CD4-positive, alpha-beta memory T cell (primary cell): ENCODE measurements at regions of chr1 and their contacts with region 1.

Region 1: DNA sequence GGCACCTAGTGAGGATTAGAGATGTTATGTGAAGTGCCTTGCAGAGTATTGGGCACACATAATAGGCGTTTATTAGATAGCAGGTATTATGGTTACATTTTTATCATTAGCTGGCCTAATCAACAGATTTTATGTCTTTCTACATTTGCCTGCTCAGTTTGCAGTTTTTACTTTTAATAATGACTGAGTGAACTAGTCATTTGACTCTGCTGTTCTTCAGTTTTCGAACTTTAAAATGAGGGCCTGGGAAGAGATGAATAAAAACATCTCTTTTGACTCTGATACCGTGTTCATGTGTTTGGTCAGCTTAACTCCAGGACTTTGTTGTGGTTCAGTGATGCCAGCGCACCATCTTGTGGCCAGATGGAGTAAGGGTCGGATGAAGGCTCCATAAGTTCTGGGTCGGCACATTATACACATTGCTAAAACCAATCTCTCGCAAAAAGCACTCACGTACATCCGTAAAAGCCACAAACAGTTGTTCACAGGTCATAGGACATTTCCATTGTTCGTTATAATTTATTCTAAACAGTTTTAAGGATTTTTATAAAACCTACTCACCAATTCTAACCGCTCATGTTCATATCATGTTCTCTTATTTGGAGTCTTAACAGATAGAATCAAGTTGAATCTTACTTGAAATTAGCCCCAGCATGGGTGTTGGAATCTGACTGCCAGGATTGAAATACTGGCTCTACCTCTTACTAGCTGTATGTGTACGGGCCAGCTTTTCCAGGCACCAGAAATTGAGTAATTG is 78.4 kb upstream of the GPR88 start:
- DNase-seq: peak; percentile 57 to 70 (median 62)
- H3K4me3 ChIP-seq: no peak overlapping the region
- H3K4me3 Mint-ChIP-seq: peak overlapping the region in 7 of 8 donors; percentile 40 to 75 (median 63)
- H3K27ac ChIP-seq: peak overlapping the region; percentile 8
- H3K27ac Mint-ChIP-seq: peak overlapping the region; percentile 65 to 91 (median 90)
- H3K4me1 ChIP-seq: peaks cover 70% of the 10 kb centered on the region
- H3K4me1 Mint-ChIP-seq: peaks cover 44 to 86% (median 60%) of the 10 kb centered on the region in 4 donors
- H3K27me3 ChIP-seq: no peaks in the 10 kb centered on the region
- H3K27me3 Mint-ChIP-seq: no peaks in the 10 kb centered on the region

Region 2: GRCh38 chr1:99808391-99809115 is 651.0 kb before region 1 on chr1:
- CTCF ChIA-PET with region 1: no interaction called
- POLR2A ChIA-PET with region 1: no interaction called
- intact Hi-C with region 1: loop called (anchors 1 kb)
- DNase-seq: peak; percentile 43 to 60 (median 57)
- H3K4me3 ChIP-seq: no peak overlapping the region
- H3K4me3 Mint-ChIP-seq: peak overlapping the region in 1 of 8 donors; percentile 4
- H3K27ac ChIP-seq: no peak overlapping the region
- H3K27ac Mint-ChIP-seq: peak overlapping the region in 1 of 7 donors; percentile 13
- H3K4me1 ChIP-seq: no peaks in the 10 kb centered on the region
- H3K4me1 Mint-ChIP-seq: peaks cover 0 to 6% (median 3%) of the 10 kb centered on the region in 4 donors
- H3K27me3 ChIP-seq: no peaks in the 10 kb centered on the region
- H3K27me3 Mint-ChIP-seq: peaks cover 10 to 13% of the 10 kb centered on the region in 2 donors

Region 3: DNA sequence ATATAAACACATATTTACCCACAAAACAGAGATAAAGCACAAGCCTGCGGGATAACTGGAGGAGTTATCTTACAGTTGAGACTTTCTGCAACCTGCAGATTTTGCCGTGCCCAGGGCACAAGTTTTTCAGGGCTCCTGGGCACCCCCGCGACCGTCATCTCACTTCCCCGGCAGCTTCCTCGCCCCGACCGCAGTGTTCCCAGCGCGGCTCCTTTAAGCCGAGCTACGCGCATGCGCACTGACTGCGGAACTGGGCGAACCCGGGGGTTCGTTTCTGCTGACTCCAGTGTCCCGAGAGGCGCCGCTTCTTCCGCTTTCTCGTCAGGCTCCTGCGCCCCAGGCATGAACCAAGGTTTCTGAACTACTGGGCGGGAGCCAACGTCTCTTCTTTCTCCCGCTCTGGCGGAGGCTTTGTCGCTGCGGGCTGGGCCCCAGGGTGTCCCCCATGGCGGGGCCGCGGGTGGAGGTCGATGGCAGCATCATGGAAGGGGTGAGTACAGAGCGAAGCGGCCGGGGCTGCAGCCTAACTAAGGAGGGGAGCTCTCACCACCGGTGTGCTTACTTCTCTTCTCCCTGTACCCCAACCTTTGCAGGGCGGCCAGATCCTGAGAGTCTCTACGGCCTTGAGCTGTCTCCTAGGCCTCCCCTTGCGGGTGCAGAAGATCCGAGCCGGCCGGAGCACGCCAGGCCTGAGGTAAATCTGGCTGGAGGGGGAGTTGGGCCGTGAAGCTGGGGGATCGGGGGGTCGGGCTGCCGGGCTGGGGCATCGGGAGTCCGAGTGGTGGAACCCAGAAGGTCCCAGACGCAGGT is 193.4 kb before region 1 on chr1 and contains the start of gene RTCA:
- CTCF ChIA-PET with region 1: interaction called, 9 read pairs
- POLR2A ChIA-PET with region 1: interaction called, 12 read pairs
- intact Hi-C with region 1: loop called (anchors 1 kb)
- DNase-seq: peak; percentile 93 to 97 (median 94)
- H3K4me3 ChIP-seq: peak within 1 kb of the TSS; percentile 77
- H3K4me3 Mint-ChIP-seq: peak within 1 kb of the TSS; percentile 99 to 100 (median 100)
- H3K27ac ChIP-seq: peak within 1 kb of the TSS; percentile 78
- H3K27ac Mint-ChIP-seq: peak within 1 kb of the TSS; percentile 96 to 99 (median 98)
- H3K4me1 ChIP-seq: peaks cover 44% of the 10 kb centered on the region
- H3K4me1 Mint-ChIP-seq: peaks cover 19 to 58% (median 39%) of the 10 kb centered on the region in 4 donors
- H3K27me3 ChIP-seq: no peaks in the 10 kb centered on the region
- H3K27me3 Mint-ChIP-seq: no peaks in the 10 kb centered on the region
- total RNA-seq, gene RTCA: 39.7 to 41.4 TPM

Region 4: GRCh38 chr1:100358210-100358609 is 101.3 kb before region 1 on chr1:
- CTCF ChIA-PET with region 1: interaction called, 57 read pairs
- POLR2A ChIA-PET with region 1: interaction called, 233 read pairs
- intact Hi-C with region 1: loop called (anchors 1 kb)
- DNase-seq: no peak
- H3K4me3 ChIP-seq: no peak overlapping the region
- H3K4me3 Mint-ChIP-seq: peak overlapping the region; percentile 53 to 100 (median 96)
- H3K27ac ChIP-seq: no peak overlapping the region
- H3K27ac Mint-ChIP-seq: peak overlapping the region; percentile 5 to 97 (median 66)
- H3K4me1 ChIP-seq: peaks cover 85% of the 10 kb centered on the region
- H3K4me1 Mint-ChIP-seq: peaks cover 63 to 98% (median 79%) of the 10 kb centered on the region in 4 donors
- H3K27me3 ChIP-seq: no peaks in the 10 kb centered on the region
- H3K27me3 Mint-ChIP-seq: no peaks in the 10 kb centered on the region

Region 5: DNA sequence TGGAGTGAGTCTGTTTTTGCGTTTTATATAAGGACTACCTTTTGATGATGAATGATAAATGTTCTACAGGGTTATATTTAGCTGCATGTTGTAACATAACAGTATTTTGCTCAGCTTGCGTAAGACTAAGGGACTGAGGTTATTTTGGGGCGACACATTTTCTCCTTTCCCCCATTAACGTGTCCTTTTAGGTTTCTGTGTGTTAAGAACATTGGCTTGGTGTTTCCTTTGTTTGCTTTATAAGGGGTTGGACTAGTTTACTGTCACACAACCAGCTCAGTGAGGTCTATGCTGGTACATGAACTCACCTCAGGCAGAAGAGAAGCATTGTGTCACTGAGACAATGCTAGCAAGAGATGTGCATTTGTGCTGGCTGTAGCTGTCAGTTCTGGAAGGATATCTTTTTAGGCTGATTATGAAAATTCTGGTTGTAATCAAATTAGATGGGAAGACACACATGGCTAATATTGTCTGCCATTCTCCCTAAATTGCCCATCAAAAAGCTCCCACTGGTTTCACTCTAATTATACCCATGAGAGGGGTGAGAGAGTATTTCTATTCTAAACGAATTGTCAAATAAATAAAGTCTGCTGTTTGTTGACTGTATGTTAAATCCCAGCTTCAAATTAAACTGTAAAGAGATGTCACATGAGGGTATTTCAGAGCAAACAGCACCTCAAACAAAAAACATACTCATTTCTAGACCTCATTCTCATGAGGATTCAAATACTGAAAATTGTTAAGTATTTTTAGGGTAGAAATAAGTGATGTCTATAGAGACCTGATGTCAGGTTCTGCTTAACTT is 44.6 kb before region 1 on chr1:
- CTCF ChIA-PET with region 1: interaction called, 17 read pairs
- POLR2A ChIA-PET with region 1: interaction called, 272 read pairs
- intact Hi-C with region 1: no loop called
- DNase-seq: peak; percentile 39 to 55 (median 50)
- H3K4me3 ChIP-seq: peak overlapping the region in 1 of 2 donors; percentile 2
- H3K4me3 Mint-ChIP-seq: peak overlapping the region in 7 of 8 donors; percentile 29 to 87 (median 70)
- H3K27ac ChIP-seq: peak overlapping the region; percentile 48
- H3K27ac Mint-ChIP-seq: peak overlapping the region; percentile 73 to 96 (median 89)
- H3K4me1 ChIP-seq: peaks cover 96% of the 10 kb centered on the region
- H3K4me1 Mint-ChIP-seq: peaks cover 70 to 89% (median 79%) of the 10 kb centered on the region in 4 donors
- H3K27me3 ChIP-seq: no peaks in the 10 kb centered on the region
- H3K27me3 Mint-ChIP-seq: no peaks in the 10 kb centered on the region

Region 6: DNA sequence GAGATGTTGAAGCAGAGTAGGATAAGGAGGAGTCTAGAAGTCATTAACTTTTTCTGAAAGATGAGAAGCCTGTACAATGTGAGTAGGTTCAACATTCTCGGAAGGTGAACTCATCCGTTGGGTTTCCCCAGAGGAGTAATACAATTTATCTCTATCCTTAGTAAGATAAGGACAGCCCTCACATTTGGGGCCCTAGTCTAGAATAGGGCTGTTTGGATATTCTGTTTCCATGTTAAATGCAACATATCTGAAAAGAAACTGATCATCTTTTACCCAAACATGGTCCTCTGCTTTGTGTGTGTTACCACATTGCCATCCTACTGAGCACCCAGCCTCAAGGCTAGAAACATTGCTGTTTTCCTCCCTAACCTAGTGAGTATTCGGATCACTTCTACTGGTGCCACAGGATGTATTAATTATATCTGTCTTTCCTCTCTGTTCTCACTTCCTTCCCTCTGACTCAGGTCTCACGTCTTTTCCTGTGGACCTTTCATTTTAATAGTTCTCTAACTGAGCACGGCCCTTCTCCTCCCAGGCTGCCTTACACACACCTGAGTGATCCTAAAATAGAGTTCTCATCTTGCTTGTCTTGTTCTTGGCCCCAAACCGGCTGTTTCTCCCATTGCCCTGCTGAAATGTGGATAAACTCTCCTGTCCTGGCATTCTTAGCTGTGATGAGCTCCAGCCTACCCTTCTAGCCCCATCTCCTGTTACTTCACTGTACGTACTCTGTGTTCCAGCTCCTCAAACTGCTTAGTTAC is 15.5 kb before region 1 on chr1:
- CTCF ChIA-PET with region 1: interaction called, 32 read pairs
- POLR2A ChIA-PET with region 1: interaction called, 9 read pairs
- intact Hi-C with region 1: loop called (anchors 2 kb)
- DNase-seq: peak; percentile 52 to 69 (median 61)
- H3K4me3 ChIP-seq: peak overlapping the region; percentile 8 to 26
- H3K4me3 Mint-ChIP-seq: peak overlapping the region; percentile 74 to 91 (median 80)
- H3K27ac ChIP-seq: peak overlapping the region; percentile 96
- H3K27ac Mint-ChIP-seq: peak overlapping the region; percentile 98 to 100 (median 99)
- H3K4me1 ChIP-seq: peaks cover 99% of the 10 kb centered on the region
- H3K4me1 Mint-ChIP-seq: peaks cover 65 to 93% (median 75%) of the 10 kb centered on the region in 4 donors
- H3K27me3 ChIP-seq: no peaks in the 10 kb centered on the region
- H3K27me3 Mint-ChIP-seq: no peaks in the 10 kb centered on the region